Esophagus squamous epithelium (tissue), 5 donors: ENCODE measurements at regions of chr1 and their contacts with region 1.

Region 1: GRCh38 chr1:161225534-161226319 is at the start of gene TOMM40L:
- DNase-seq: peak; percentile 61
- H3K4me3 ChIP-seq: peak within 1 kb of the TSS; percentile 59 to 88 (median 68)
- H3K27ac ChIP-seq: peak within 1 kb of the TSS; percentile 76 to 92 (median 84)
- H3K4me1 ChIP-seq: peaks cover 21 to 33% (median 25%) of the 10 kb centered on the region in 3 donors
- H3K27me3 ChIP-seq: no peaks in the 10 kb centered on the region
- CTCF ChIP-seq: peak; percentile 44 to 73 (median 56)
- POLR2A ChIP-seq: no peak
- total RNA-seq, gene TOMM40L: 7.6 to 23.9 (median 10.2) TPM

Region 2: GRCh38 chr1:161292631-161293030 is 66.9 kb after region 1 on chr1:
- intact Hi-C with region 1: loop called (anchors 5 kb)
- DNase-seq: no peak
- H3K4me3 ChIP-seq: no peak overlapping the region
- H3K27ac ChIP-seq: no peak overlapping the region
- H3K4me1 ChIP-seq: no peaks in the 10 kb centered on the region
- H3K27me3 ChIP-seq: no peaks in the 10 kb centered on the region
- CTCF ChIP-seq: no peak
- POLR2A ChIP-seq: no peak

Region 3: DNA sequence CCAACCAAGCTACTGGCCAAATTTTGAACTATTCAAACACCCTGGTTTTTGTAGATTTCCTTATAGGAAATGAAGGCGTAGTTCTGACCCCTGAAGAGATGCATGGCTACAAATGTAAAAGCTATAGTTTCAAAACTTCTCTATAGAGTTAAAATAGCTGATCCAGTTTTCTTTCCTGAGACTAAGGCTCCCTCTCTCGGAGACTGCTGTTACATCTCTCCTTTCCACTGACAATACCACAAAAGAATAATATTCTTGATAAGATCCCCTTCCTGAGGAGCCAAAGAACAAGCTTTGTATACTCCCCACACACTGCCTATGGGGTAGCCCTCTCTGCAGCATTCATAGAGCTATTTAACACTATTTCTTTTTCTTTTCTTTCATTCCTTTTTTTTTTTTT is 148.6 kb after region 1 on chr1:
- intact Hi-C with region 1: loop called (anchors 10 kb)
- DNase-seq: no peak
- H3K4me3 ChIP-seq: no peak overlapping the region
- H3K27ac ChIP-seq: no peak overlapping the region
- H3K4me1 ChIP-seq: peaks cover 0 to 9% (median 0%) of the 10 kb centered on the region in 3 donors
- H3K27me3 ChIP-seq: no peaks in the 10 kb centered on the region
- CTCF ChIP-seq: peak in 2 of 6 experiments; percentile 5 to 20
- POLR2A ChIP-seq: no peak